ENCODE measurements at regions of chr20 and their contacts with region 1.

Region 1: GRCh38 chr20:22684072-22684762 is 99.8 kb upstream of the FOXA2 start:
- DNase-seq: peak; percentile 67 to 80 (median 73)
- H3K4me3 ChIP-seq: no peak overlapping the region
- H3K27ac ChIP-seq: no peak overlapping the region
- H3K4me1 ChIP-seq: peaks cover 0 to 16% (median 10%) of the 10 kb centered on the region in 4 experiments
- H3K27me3 ChIP-seq: no peaks in the 10 kb centered on the region

Region 2: GRCh38 chr20:22333885-22334545 is 350.2 kb before region 1 on chr20:
- CTCF ChIA-PET with region 1: interaction called, 98 read pairs
- POLR2A ChIA-PET with region 1: no interaction called
- DNase-seq: peak; percentile 61 to 85 (median 80)
- H3K4me3 ChIP-seq: no peak overlapping the region
- H3K27ac ChIP-seq: no peak overlapping the region
- H3K4me1 ChIP-seq: no peaks in the 10 kb centered on the region
- H3K27me3 ChIP-seq: peaks cover 0 to 35% (median 15%) of the 10 kb centered on the region in 5 experiments

Region 3: GRCh38 chr20:22339091-22339881 is 344.9 kb before region 1 on chr20:
- CTCF ChIA-PET with region 1: interaction called, 98 read pairs
- POLR2A ChIA-PET with region 1: no interaction called
- DNase-seq: peak; percentile 77 to 85 (median 79)
- H3K4me3 ChIP-seq: peak overlapping the region in 2 of 7 experiments; percentile 17 to 25
- H3K27ac ChIP-seq: no peak overlapping the region
- H3K4me1 ChIP-seq: peaks cover 0 to 10% (median 8%) of the 10 kb centered on the region in 4 experiments
- H3K27me3 ChIP-seq: peaks cover 0 to 2% (median 0%) of the 10 kb centered on the region in 5 experiments

Region 4: GRCh38 chr20:22744341-22745193 is 60.4 kb after region 1 on chr20:
- CTCF ChIA-PET with region 1: no interaction called
- POLR2A ChIA-PET with region 1: no interaction called
- DNase-seq: no peak
- H3K4me3 ChIP-seq: no peak overlapping the region
- H3K27ac ChIP-seq: no peak overlapping the region
- H3K4me1 ChIP-seq: no peaks in the 10 kb centered on the region
- H3K27me3 ChIP-seq: no peaks in the 10 kb centered on the region